ENCODE measurements at regions of chr22 and their contacts with region 1.

Region 1: DNA sequence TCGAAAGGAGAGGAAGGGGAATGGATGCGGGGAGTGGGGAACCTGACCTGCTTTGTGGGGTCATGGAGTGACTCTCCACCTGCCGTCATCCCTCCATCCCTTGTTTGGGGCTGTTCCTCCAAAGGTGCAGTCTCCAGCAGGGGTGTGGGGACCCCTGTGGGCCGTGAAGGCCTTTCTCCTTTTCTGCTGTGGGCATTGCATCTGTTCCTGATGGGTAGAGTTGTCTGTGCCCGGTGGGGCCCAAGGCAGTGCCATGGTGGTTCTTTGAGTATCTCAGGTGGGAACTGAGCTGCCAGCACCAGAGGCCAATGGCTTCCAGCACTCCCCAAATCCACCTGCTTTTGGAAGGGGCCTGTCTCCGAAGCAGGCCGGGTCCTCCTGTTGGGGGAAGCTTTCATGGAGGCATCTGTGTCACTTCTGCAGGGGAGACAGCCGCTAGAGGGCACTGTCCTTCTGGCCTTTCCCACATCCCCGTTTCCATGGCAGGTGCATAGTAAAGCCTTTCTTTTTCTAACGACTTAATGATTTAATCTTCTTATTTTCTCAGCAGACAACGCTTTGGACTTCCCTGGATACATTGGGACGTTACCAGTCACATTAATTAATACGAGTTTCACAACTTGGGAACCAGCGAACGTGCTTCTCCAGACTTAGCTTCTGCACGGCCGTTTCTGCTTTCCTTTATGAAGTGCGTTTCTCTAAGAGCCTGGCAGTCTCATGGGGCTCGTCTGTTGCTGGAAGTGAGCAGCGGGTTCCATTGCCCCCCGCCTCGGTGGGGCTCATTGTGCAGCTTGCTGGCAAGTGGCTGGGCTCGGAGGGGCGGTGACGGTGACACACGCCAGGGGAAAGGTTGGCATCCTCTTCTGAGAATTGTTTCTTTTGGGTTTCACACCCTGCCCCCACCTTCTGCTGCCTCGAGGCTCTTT is 57.1 kb downstream of the PARVB start:
- DNase-seq: peak; percentile 82
- H3K4me3 Mint-ChIP-seq: no peak overlapping the region
- H3K27ac Mint-ChIP-seq: no peak overlapping the region
- H3K4me1 Mint-ChIP-seq: no peaks in the 10 kb centered on the region
- H3K27me3 Mint-ChIP-seq: no peaks in the 10 kb centered on the region

Region 2: GRCh38 chr22:43910178-43910695 is 171.0 kb before region 1 on chr22:
- CTCF ChIA-PET with region 1: no interaction called
- intact Hi-C with region 1: no loop called
- DNase-seq: no peak
- H3K4me3 Mint-ChIP-seq: no peak overlapping the region
- H3K27ac Mint-ChIP-seq: no peak overlapping the region
- H3K4me1 Mint-ChIP-seq: no peaks in the 10 kb centered on the region
- H3K27me3 Mint-ChIP-seq: peaks cover 4% of the 10 kb centered on the region

Region 3: GRCh38 chr22:43993027-43993760 is 88.0 kb before region 1 on chr22:
- CTCF ChIA-PET with region 1: interaction called, 36 read pairs
- intact Hi-C with region 1: loop called (anchors 1 kb)
- DNase-seq: peak; percentile 68
- H3K4me3 Mint-ChIP-seq: no peak overlapping the region
- H3K27ac Mint-ChIP-seq: no peak overlapping the region
- H3K4me1 Mint-ChIP-seq: peaks cover 17% of the 10 kb centered on the region
- H3K27me3 Mint-ChIP-seq: no peaks in the 10 kb centered on the region

Region 4: GRCh38 chr22:44068422-44069191 is 12.6 kb before region 1 on chr22:
- CTCF ChIA-PET with region 1: interaction called, 14 read pairs
- intact Hi-C with region 1: no loop called
- DNase-seq: no peak
- H3K4me3 Mint-ChIP-seq: no peak overlapping the region
- H3K27ac Mint-ChIP-seq: no peak overlapping the region
- H3K4me1 Mint-ChIP-seq: peaks cover 7% of the 10 kb centered on the region
- H3K27me3 Mint-ChIP-seq: peaks cover 13% of the 10 kb centered on the region

Region 5: GRCh38 chr22:44154436-44154942 is 73.3 kb after region 1 on chr22:
- CTCF ChIA-PET with region 1: no interaction called
- intact Hi-C with region 1: no loop called
- DNase-seq: no peak
- H3K4me3 Mint-ChIP-seq: no peak overlapping the region
- H3K27ac Mint-ChIP-seq: no peak overlapping the region
- H3K4me1 Mint-ChIP-seq: no peaks in the 10 kb centered on the region
- H3K27me3 Mint-ChIP-seq: peaks cover 2% of the 10 kb centered on the region

Region 6: GRCh38 chr22:44574065-44574464 is 492.9 kb after region 1 on chr22:
- CTCF ChIA-PET with region 1: no interaction called
- intact Hi-C with region 1: loop called (anchors 5 kb)
- DNase-seq: no peak
- H3K4me3 Mint-ChIP-seq: no peak overlapping the region
- H3K27ac Mint-ChIP-seq: no peak overlapping the region
- H3K4me1 Mint-ChIP-seq: no peaks in the 10 kb centered on the region
- H3K27me3 Mint-ChIP-seq: peaks cover 32% of the 10 kb centered on the region

Region 7: DNA sequence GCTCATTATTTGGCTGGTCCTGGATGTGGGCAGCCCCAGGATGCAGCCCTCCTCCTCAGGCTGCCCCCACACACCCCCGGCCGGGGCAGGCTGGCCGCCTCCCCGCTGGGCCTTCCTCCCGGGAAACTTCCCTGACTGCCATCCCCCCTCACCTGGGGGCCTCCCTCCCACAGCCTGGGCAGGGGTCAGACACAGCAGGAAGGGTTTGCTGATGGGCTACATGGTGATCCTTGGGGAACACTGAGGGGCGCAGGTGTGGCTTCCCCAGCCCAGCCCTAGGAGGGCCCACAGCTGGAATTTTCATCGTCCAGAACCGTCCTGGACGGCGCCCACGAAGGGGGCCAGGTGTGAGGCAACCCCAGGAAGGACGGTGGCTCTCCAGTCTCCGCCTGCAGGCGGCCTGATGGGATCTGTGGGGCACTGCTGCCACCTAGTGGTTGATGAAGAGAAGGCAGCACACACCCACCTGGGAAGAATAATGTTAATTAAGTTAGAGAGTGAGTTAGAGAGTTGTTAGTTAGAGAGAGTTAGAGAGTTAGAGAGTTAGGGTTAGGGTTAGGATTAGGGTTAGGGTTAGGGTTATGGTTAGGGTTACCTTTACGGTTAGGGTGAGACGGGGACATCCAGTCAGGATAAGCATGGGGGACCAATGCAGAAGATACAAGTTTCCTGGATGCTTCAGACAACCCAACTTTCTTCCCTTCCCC is 544.9 kb after region 1 on chr22:
- CTCF ChIA-PET with region 1: interaction called, 11 read pairs
- intact Hi-C with region 1: loop called (anchors 2 kb)
- DNase-seq: peak; percentile 84
- H3K4me3 Mint-ChIP-seq: no peak overlapping the region
- H3K27ac Mint-ChIP-seq: no peak overlapping the region
- H3K4me1 Mint-ChIP-seq: peaks cover 4% of the 10 kb centered on the region
- H3K27me3 Mint-ChIP-seq: no peaks in the 10 kb centered on the region

Measured in activated naive CD4-positive, alpha-beta T cell treated with anti-CD3 and anti-CD28 coated beads for 36 hours (primary cell).